Activated CD8-positive, alpha-beta T cell treated with anti-CD3 and anti-CD28 coated beads for 36 hours (primary cell): ENCODE measurements at regions of chr2 and their contacts with region 1.

Region 1: GRCh38 chr2:54606393-54606969 is 117.0 kb upstream of the EML6 start:
- DNase-seq: peak; percentile 66
- ATAC-seq: peak; percentile 72
- H3K4me3 Mint-ChIP-seq: peak overlapping the region; percentile 42
- H3K27ac Mint-ChIP-seq: peak overlapping the region; percentile 87
- H3K4me1 Mint-ChIP-seq: peaks cover 83% of the 10 kb centered on the region
- H3K27me3 Mint-ChIP-seq: no peaks in the 10 kb centered on the region
- CTCF ChIP-seq: no peak

Region 2: GRCh38 chr2:54384301-54385203 is 221.9 kb before region 1 on chr2:
- CTCF ChIA-PET with region 1: no interaction called
- POLR2A ChIA-PET with region 1: no interaction called
- intact Hi-C with region 1: no loop called
- DNase-seq: no peak
- ATAC-seq: no peak
- H3K4me3 Mint-ChIP-seq: no peak overlapping the region
- H3K27ac Mint-ChIP-seq: no peak overlapping the region
- H3K4me1 Mint-ChIP-seq: no peaks in the 10 kb centered on the region
- H3K27me3 Mint-ChIP-seq: no peaks in the 10 kb centered on the region
- CTCF ChIP-seq: no peak

Region 3: GRCh38 chr2:54570925-54571694 is 35.4 kb before region 1 on chr2:
- CTCF ChIA-PET with region 1: interaction called, 4 read pairs
- POLR2A ChIA-PET with region 1: interaction called, 5 read pairs
- intact Hi-C with region 1: loop called (anchors 5 kb)
- DNase-seq: peak; percentile 89
- ATAC-seq: peak; percentile 37
- H3K4me3 Mint-ChIP-seq: peak overlapping the region; percentile 43
- H3K27ac Mint-ChIP-seq: peak overlapping the region; percentile 96
- H3K4me1 Mint-ChIP-seq: peaks cover 86% of the 10 kb centered on the region
- H3K27me3 Mint-ChIP-seq: no peaks in the 10 kb centered on the region
- CTCF ChIP-seq: no peak